CD4-positive, alpha-beta memory T cell (primary cell): ENCODE measurements at regions of chr12 and their contacts with region 1.

Region 1: GRCh38 chr12:4648501-4649357 is at the starts of genes AKAP3 and NDUFA9:
- DNase-seq: peak; percentile 80 to 87 (median 82)
- H3K4me3 ChIP-seq: peak within 1 kb of the TSS; percentile 61 to 94
- H3K4me3 Mint-ChIP-seq: peak within 1 kb of the TSS; percentile 92 to 99 (median 96)
- H3K27ac ChIP-seq: peak within 1 kb of the TSS; percentile 66
- H3K27ac Mint-ChIP-seq: peak within 1 kb of the TSS; percentile 87 to 98 (median 94)
- H3K4me1 ChIP-seq: peaks cover 29% of the 10 kb centered on the region
- H3K4me1 Mint-ChIP-seq: peaks cover 36 to 56% (median 44%) of the 10 kb centered on the region in 4 donors
- H3K27me3 ChIP-seq: no peaks in the 10 kb centered on the region
- H3K27me3 Mint-ChIP-seq: no peaks in the 10 kb centered on the region
- total RNA-seq, gene AKAP3: 5.5 to 6.2 TPM
- total RNA-seq, gene NDUFA9: 55.7 to 58.6 TPM

Region 2: GRCh38 chr12:3872800-3873636 is 775.7 kb before region 1 on chr12 and contains the start of gene PARP11:
- CTCF ChIA-PET with region 1: no interaction called
- POLR2A ChIA-PET with region 1: no interaction called
- intact Hi-C with region 1: loop called (anchors 5 kb)
- DNase-seq: peak; percentile 97 to 98 (median 97)
- H3K4me3 ChIP-seq: peak within 1 kb of the TSS; percentile 53 to 87
- H3K4me3 Mint-ChIP-seq: peak within 1 kb of the TSS; percentile 95 to 99 (median 98)
- H3K27ac ChIP-seq: peak within 1 kb of the TSS; percentile 95
- H3K27ac Mint-ChIP-seq: peak within 1 kb of the TSS; percentile 95 to 100 (median 99)
- H3K4me1 ChIP-seq: peaks cover 50% of the 10 kb centered on the region
- H3K4me1 Mint-ChIP-seq: peaks cover 34 to 57% (median 40%) of the 10 kb centered on the region in 4 donors
- H3K27me3 ChIP-seq: no peaks in the 10 kb centered on the region
- H3K27me3 Mint-ChIP-seq: no peaks in the 10 kb centered on the region
- total RNA-seq, gene PARP11: 36.4 to 39.9 TPM

Region 3: GRCh38 chr12:4353785-4354208 is 294.9 kb before region 1 on chr12:
- CTCF ChIA-PET with region 1: no interaction called
- POLR2A ChIA-PET with region 1: no interaction called
- intact Hi-C with region 1: loop called (anchors 2 kb)
- DNase-seq: peak; percentile 42 to 65 (median 53)
- H3K4me3 ChIP-seq: no peak overlapping the region
- H3K4me3 Mint-ChIP-seq: no peak overlapping the region
- H3K27ac ChIP-seq: no peak overlapping the region
- H3K27ac Mint-ChIP-seq: peak overlapping the region in 5 of 7 donors; percentile 42 to 80 (median 59)
- H3K4me1 ChIP-seq: no peaks in the 10 kb centered on the region
- H3K4me1 Mint-ChIP-seq: peaks cover 3 to 7% (median 4%) of the 10 kb centered on the region in 4 donors
- H3K27me3 ChIP-seq: no peaks in the 10 kb centered on the region
- H3K27me3 Mint-ChIP-seq: no peaks in the 10 kb centered on the region

Region 4: DNA sequence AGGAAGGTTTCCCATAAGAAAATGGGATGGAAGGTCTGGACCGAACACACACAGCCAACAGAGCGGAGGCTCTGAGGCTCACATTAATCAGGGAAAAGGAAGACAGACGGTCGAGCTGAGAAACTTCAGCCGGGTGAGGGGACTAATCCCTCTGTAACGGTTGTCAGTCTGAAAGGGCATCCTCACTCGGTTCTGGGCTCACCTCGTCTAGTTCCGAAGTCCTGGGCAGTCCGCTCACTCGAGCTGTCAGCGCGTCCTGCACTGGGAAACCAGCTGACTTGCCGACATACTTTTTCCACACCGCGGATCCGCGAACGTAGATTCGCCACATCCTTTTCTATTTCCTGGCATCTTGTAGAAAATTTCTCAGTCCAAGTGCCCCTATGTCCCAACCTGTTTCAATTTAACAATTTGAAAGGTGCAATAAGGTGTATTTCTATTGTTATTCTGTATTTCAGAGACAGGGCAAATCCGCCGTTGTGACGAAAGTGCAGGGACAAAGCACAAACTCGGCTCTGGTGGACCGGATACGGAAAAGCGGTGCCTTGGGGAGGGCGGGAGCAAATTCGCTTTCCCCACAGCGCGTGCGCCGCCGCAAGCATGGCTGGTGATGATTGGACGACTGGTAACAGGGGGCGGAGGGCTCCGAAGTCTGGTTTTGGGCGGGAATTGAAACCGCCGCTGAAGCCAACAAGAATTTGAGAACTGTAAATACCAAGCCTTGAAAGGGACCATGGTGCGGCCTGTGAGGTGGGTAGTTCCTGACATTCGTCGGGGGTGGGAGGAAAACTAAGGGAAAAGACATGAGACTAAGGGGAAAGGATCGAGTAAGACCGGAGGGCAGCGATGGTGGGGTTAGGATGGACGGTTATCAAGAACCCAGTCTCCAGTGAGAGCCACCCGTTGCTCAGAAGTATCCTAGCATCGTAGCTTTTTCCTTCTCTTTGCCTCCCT is 110.2 kb before region 1 on chr12 and contains the start of gene RAD51AP1:
- CTCF ChIA-PET with region 1: no interaction called
- POLR2A ChIA-PET with region 1: interaction called, 6 read pairs
- intact Hi-C with region 1: loop called (anchors 1 kb)
- DNase-seq: peak; percentile 96 to 98 (median 98)
- H3K4me3 ChIP-seq: peak within 1 kb of the TSS; percentile 73 to 90
- H3K4me3 Mint-ChIP-seq: peak within 1 kb of the TSS; percentile 93 to 99 (median 96)
- H3K27ac ChIP-seq: peak within 1 kb of the TSS; percentile 79
- H3K27ac Mint-ChIP-seq: peak within 1 kb of the TSS; percentile 94 to 99 (median 98)
- H3K4me1 ChIP-seq: peaks cover 21% of the 10 kb centered on the region
- H3K4me1 Mint-ChIP-seq: peaks cover 13 to 34% (median 26%) of the 10 kb centered on the region in 4 donors
- H3K27me3 ChIP-seq: no peaks in the 10 kb centered on the region
- H3K27me3 Mint-ChIP-seq: no peaks in the 10 kb centered on the region
- total RNA-seq, gene RAD51AP1: 0.58 to 1.5 TPM

Region 5: DNA sequence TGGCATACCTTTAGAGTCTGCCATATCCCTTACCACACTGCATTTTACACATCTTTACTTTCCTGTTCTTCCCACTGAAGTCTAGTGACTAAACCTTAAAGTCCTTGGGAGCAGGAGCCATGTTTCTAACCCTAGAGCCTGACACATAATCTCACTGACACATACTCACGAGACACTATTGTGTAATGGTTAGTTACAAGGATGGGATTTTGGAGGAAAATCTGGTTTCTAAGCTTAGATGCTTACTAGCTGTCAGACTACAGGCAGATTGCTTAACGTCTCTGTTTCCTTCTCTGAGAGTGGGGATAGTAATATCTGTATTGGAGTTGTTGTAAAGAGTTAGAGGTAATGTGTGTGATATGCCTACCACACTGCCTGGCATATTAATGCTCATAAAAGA is 92.9 kb before region 1 on chr12:
- CTCF ChIA-PET with region 1: no interaction called
- POLR2A ChIA-PET with region 1: no interaction called
- intact Hi-C with region 1: no loop called
- DNase-seq: no peak
- H3K4me3 ChIP-seq: no peak overlapping the region
- H3K4me3 Mint-ChIP-seq: no peak overlapping the region
- H3K27ac ChIP-seq: no peak overlapping the region
- H3K27ac Mint-ChIP-seq: peak overlapping the region in 1 of 7 donors; percentile 2
- H3K4me1 ChIP-seq: no peaks in the 10 kb centered on the region
- H3K4me1 Mint-ChIP-seq: no peaks in the 10 kb centered on the region
- H3K27me3 ChIP-seq: no peaks in the 10 kb centered on the region
- H3K27me3 Mint-ChIP-seq: no peaks in the 10 kb centered on the region

Region 6: DNA sequence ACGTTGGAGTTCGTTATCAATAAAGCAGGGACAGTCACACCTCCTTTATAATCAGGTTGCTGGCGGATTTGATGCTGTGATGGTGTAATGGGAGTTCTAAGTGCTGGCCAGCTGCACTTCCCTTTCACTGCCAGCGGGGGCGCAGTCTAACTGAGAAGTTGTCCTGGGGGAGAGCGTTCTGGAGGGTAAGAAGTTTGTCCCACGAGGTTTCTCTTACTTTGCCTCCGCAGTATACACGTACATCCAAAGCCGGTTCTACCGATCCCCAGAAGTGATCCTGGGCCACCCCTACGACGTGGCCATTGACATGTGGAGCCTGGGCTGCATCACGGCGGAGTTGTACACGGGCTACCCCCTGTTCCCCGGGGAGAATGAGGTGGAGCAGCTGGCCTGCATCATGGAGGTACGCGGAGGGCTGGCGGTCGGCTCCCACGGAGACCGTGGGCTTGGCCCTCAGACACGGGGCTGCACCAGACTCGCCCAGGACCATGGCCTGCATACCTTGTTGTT is 44.0 kb before region 1 on chr12:
- CTCF ChIA-PET with region 1: interaction called, 4 read pairs
- POLR2A ChIA-PET with region 1: interaction called, 7 read pairs
- intact Hi-C with region 1: loop called (anchors 1 kb)
- DNase-seq: peak; percentile 76 to 80 (median 78)
- H3K4me3 ChIP-seq: peak overlapping the region; percentile 85 to 89
- H3K4me3 Mint-ChIP-seq: peak overlapping the region; percentile 96 to 100 (median 99)
- H3K27ac ChIP-seq: peak overlapping the region; percentile 34
- H3K27ac Mint-ChIP-seq: peak overlapping the region; percentile 56 to 97 (median 93)
- H3K4me1 ChIP-seq: peaks cover 21% of the 10 kb centered on the region
- H3K4me1 Mint-ChIP-seq: peaks cover 12 to 33% (median 25%) of the 10 kb centered on the region in 4 donors
- H3K27me3 ChIP-seq: no peaks in the 10 kb centered on the region
- H3K27me3 Mint-ChIP-seq: peaks cover 7% of the 10 kb centered on the region in 2 donors

Region 7: GRCh38 chr12:4628406-4628805 is 20.3 kb before region 1 on chr12:
- CTCF ChIA-PET with region 1: no interaction called
- POLR2A ChIA-PET with region 1: no interaction called
- intact Hi-C with region 1: no loop called
- DNase-seq: no peak
- H3K4me3 ChIP-seq: no peak overlapping the region
- H3K4me3 Mint-ChIP-seq: no peak overlapping the region
- H3K27ac ChIP-seq: no peak overlapping the region
- H3K27ac Mint-ChIP-seq: no peak overlapping the region
- H3K4me1 ChIP-seq: no peaks in the 10 kb centered on the region
- H3K4me1 Mint-ChIP-seq: no peaks in the 10 kb centered on the region
- H3K27me3 ChIP-seq: no peaks in the 10 kb centered on the region
- H3K27me3 Mint-ChIP-seq: peaks cover under 1 to 8% of the 10 kb centered on the region in 2 donors